ENCODE measurements at regions of chr20 and their contacts with region 1.

Region 1: DNA sequence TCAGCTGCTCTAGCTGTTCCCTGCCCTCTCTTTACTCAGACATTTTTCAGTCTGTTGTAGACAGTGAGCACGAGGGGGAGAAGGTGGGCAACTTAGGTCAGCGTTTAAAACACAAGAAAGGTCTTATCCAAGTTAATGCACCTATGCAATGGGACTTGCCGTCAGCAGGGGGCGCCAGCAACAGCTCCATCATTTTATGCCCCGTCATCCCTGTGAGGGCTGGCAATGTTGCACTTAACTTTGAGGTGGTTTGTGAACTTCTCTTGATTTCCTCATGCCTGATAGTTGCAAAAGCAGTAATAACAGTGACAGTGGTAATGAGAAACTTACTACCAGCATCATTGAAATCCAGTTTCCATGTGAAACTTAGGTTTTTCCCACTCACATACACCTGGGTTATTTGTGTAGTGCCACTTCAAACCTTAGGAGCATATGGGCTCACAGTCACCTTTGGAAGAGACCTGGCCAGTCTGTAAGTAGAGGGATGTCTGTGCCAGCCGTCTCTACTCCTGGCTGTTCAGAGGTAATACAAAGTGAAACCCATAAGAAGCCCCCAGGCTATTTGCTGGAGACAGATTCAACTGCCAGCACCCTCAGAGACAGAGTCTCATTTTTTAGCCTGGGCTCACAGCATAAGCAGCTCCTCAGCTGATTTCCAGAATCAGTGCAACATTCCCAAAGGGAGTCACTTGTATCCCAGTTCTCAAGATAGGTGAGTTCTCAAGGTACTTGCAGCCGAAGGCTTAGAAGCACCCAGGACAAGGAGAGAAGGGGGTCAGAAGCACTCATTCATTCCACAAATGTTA is 44.8 kb upstream of the ID1 start:
- DNase-seq: peak; percentile 59
- ATAC-seq: peak; percentile 52
- H3K4me3 ChIP-seq: 0 out of 4 replicates have a peak overlapping the region, but pooled peaks of 1 of the 2 experiments have one; percentile 22
- H3K27ac ChIP-seq: peak overlapping the region; percentile 93
- H3K4me1 ChIP-seq: peaks cover 74 to 83% of the 10 kb centered on the region in 2 experiments
- H3K27me3 ChIP-seq: no peaks in the 10 kb centered on the region
- CTCF ChIP-seq: peak in 2 of 3 experiments; percentile 89 to 97; a peak in 4 of 6 replicates
- POLR2A ChIP-seq: no peak
- RAD21 ChIP-seq: no peak

Region 2: GRCh38 chr20:31496761-31497295 is 63.5 kb before region 1 on chr20:
- CTCF ChIA-PET with region 1: interaction called, 11 read pairs
- POLR2A ChIA-PET with region 1: no interaction called
- RAD21 ChIA-PET with region 1: no interaction called
- intact Hi-C with region 1: no loop called
- DNase-seq: no peak
- ATAC-seq: no peak
- H3K4me3 ChIP-seq: no peak overlapping the region
- H3K27ac ChIP-seq: no peak overlapping the region
- H3K4me1 ChIP-seq: 0 out of 4 replicates have a peak, but pooled peaks cover 0 to 6% of the 10 kb centered on the region in 2 experiments
- H3K27me3 ChIP-seq: no peaks in the 10 kb centered on the region
- CTCF ChIP-seq: no peak
- POLR2A ChIP-seq: no peak
- RAD21 ChIP-seq: no peak

Region 3: DNA sequence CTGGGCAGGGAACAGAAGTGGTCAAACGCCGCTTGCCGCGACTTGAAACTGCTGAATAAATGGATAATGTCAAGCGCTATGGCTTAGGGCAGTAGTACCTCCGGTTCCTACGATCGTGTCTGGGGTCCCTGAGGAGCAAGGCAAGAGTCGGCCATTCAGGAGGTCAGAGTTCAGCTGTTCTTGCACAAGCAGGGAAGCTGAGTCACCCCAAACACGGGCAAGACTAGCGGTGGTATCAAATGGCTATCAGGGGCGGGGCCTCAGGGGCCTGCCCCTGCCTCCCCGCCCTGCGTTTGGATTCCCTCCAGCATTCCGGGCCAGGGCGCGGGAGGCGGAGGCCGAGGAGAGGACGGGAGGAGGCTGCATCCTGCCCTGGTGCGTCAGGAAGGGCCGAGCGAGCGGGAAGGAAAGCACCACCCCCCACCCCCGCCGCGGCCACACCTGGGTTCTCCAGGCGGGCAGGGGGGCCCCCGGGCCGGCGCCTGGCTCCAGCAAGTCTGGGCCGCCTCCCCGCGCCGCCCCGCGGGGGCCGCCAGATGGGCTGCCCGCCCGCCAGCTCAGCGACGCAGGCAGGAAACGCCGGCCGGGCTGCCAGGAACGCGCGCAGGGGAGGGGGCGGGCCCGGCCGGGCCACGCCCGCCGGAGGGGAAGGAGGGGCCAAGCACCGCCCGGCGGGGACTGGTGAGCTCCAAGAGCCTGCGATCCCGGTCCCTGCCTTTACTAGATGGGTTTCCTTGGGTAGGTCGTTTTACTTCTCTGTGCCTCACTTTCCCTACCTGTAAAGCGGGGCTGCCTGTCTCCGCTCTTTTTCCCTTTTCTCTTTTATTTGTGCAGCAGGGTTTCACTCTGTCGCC is 12.6 kb after region 1 on chr20:
- CTCF ChIA-PET with region 1: interaction called, 129 read pairs
- POLR2A ChIA-PET with region 1: interaction called, 32 read pairs
- RAD21 ChIA-PET with region 1: interaction called, 5 to 8 read pairs
- intact Hi-C with region 1: no loop called
- DNase-seq: peak; percentile 96
- ATAC-seq: peak; percentile 72
- H3K4me3 ChIP-seq: peak overlapping the region; percentile 54 to 61
- H3K27ac ChIP-seq: peak overlapping the region; percentile 98
- H3K4me1 ChIP-seq: peaks cover 73 to 79% of the 10 kb centered on the region in 2 experiments
- H3K27me3 ChIP-seq: no peaks in the 10 kb centered on the region
- CTCF ChIP-seq: no peak
- POLR2A ChIP-seq: peak; percentile 59
- RAD21 ChIP-seq: no peak

Region 4: GRCh38 chr20:31605031-31605901 is 45.0 kb after region 1 on chr20 and contains the start of gene ID1:
- CTCF ChIA-PET with region 1: interaction called, 589 read pairs
- POLR2A ChIA-PET with region 1: interaction called, 1,106 read pairs
- RAD21 ChIA-PET with region 1: interaction called, 74 to 102 read pairs
- intact Hi-C with region 1: no loop called
- DNase-seq: peak; percentile 95
- ATAC-seq: peak; percentile 56
- H3K4me3 ChIP-seq: peak within 1 kb of the TSS; percentile 91 to 96
- H3K27ac ChIP-seq: peak within 1 kb of the TSS; percentile 98
- H3K4me1 ChIP-seq: peaks cover 60 to 93% of the 10 kb centered on the region in 2 experiments
- H3K27me3 ChIP-seq: no peaks in the 10 kb centered on the region
- CTCF ChIP-seq: no peak
- POLR2A ChIP-seq: peak; percentile 99
- RAD21 ChIP-seq: no peak
- total RNA-seq, gene ID1: 811 TPM

Region 5: DNA sequence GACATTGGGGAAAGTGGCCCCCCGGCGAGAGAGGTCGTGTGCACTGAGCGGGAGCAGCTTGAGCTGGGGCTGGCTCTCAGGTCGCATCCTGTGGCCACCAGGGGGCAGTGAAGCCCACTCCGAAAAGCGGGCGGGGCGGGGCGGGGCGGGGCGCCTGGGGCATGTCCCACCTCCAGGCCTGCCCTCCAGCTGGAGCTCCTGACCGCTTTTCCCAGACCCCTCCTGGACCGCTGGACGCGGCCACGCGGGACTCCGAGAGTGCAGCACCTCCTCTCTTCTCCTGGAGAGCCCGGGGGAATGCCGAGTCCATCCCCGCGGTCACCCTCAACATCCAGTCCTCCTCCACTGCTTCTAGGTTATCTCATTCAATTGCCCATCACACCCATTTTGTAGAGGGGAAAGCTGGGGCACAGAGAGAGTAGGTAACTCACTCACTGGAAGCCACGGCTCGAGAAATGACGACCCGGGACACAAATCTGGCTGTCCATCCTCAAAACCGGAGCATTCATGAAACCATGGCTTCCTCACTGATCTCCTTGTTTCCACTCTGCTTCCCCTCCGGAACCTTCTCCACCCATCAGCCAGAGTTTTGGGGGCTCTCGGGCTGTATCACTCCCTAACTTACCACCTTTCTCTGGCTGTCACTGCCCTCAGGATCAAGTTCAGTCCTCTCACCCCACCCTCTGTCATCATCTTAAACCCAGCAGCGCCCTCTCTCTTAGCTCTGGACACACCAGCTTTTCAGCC is 101.5 kb after region 1 on chr20:
- CTCF ChIA-PET with region 1: interaction called, 16 read pairs
- POLR2A ChIA-PET with region 1: interaction called, 4 read pairs
- RAD21 ChIA-PET with region 1: interaction called in 1 of 2 experiments, 4 read pairs
- intact Hi-C with region 1: no loop called
- DNase-seq: peak; percentile 40
- ATAC-seq: peak; percentile 75
- H3K4me3 ChIP-seq: peak overlapping the region; percentile 2 to 12; a peak in 2 of 4 replicates
- H3K27ac ChIP-seq: peak overlapping the region; percentile 53
- H3K4me1 ChIP-seq: peaks cover 43 to 62% of the 10 kb centered on the region in 2 experiments
- H3K27me3 ChIP-seq: no peaks in the 10 kb centered on the region
- CTCF ChIP-seq: peak; percentile 60 to 71 (median 67)
- POLR2A ChIP-seq: no peak
- RAD21 ChIP-seq: peak; percentile 72

Region 6: DNA sequence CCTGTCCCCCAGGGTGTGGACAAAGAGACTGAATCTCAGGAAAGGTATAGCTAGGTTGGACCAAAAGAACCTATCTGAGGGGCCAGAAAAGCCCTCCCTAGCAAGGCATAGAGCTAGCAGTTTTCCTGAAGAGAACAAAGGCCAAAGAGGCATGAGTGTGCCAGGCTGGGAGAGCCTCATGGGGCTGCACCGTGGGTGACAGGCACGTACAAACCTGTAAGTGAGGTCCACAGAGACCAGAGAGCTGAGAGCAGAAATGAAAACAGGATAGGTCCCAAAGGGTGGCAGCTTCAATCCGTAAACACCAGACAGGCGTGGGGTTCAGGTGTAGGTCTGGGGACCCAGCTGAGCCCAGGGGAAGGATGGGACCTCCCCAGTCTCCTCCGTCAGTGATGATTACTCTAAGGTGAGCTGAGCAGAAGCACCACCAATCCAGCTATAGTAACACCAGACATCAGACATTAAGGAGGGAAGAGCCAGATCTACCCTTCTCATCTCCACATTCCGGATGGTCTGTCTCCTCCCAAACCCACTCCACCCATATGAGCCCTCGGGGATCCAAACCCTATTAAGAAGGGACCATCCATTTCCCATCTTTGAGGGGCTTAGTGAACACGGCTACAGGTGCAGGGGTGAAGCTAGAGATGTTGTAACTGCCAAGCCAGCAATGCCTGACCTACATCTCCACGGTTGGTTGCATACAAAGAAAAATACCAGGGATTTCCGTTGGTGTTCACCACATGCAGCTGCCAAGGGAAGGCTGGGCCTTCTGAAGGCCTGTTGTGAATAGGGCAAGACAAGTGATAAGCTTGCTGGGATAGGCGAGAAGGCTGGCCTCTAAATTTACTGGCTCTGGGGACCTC is 124.1 kb after region 1 on chr20:
- CTCF ChIA-PET with region 1: no interaction called
- POLR2A ChIA-PET with region 1: no interaction called
- RAD21 ChIA-PET with region 1: no interaction called
- intact Hi-C with region 1: no loop called
- DNase-seq: no peak
- ATAC-seq: no peak
- H3K4me3 ChIP-seq: no peak overlapping the region
- H3K27ac ChIP-seq: peak overlapping the region; percentile 13; the same call in 1 of the 2 replicates
- H3K4me1 ChIP-seq: peaks cover 39 to 87% of the 10 kb centered on the region in 2 experiments
- H3K27me3 ChIP-seq: no peaks in the 10 kb centered on the region
- CTCF ChIP-seq: no peak
- POLR2A ChIP-seq: no peak
- RAD21 ChIP-seq: no peak

Region 7: GRCh38 chr20:33233129-33233774 is 1673.0 kb after region 1 on chr20:
- CTCF ChIA-PET with region 1: no interaction called
- POLR2A ChIA-PET with region 1: no interaction called
- RAD21 ChIA-PET with region 1: no interaction called
- intact Hi-C with region 1: no loop called
- DNase-seq: no peak
- ATAC-seq: peak; percentile 67
- H3K4me3 ChIP-seq: no peak overlapping the region
- H3K27ac ChIP-seq: no peak overlapping the region
- H3K4me1 ChIP-seq: no peaks in the 10 kb centered on the region
- H3K27me3 ChIP-seq: peaks cover 76% of the 10 kb centered on the region
- CTCF ChIP-seq: peak in 2 of 3 experiments; percentile 17 to 25; a peak in 3 of 6 replicates
- POLR2A ChIP-seq: no peak
- RAD21 ChIP-seq: peak; percentile 39

Measured in HCT116 (cell line).